ENCODE measurements at regions of chr12 and their contacts with region 1.

Region 1: DNA sequence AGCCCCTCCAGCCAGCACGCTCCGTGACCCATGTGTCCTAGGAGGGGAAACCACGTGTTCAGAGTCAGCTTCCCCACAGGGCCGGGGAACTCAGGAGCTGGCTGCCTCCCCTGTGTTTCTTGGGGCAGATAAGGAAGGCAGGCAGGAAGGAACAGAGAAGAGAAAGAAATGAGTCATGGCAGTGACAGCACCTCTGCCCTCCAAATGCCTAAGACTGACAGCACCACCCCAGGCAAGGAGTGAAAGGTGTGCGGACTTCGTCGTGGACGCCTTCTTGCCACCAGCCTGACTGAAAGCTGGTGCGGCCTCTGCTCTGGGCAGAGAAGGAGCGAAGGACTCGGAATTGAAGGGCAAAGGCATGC is 166.9 kb upstream of the FKBP4 start:
- DNase-seq: no peak
- H3K4me3 ChIP-seq: no peak overlapping the region
- H3K4me3 Mint-ChIP-seq: no peak overlapping the region
- H3K27ac Mint-ChIP-seq: no peak overlapping the region
- H3K4me1 ChIP-seq: no peaks in the 10 kb centered on the region
- H3K4me1 Mint-ChIP-seq: no peaks in the 10 kb centered on the region
- H3K27me3 ChIP-seq: no peaks in the 10 kb centered on the region; the same call in 1 of the 2 replicates
- H3K27me3 Mint-ChIP-seq: peaks cover 46% of the 10 kb centered on the region
- CTCF ChIP-seq: no peak

Region 2: GRCh38 chr12:2494486-2495192 is 133.2 kb before region 1 on chr12:
- CTCF ChIA-PET with region 1: no interaction called
- POLR2A ChIA-PET with region 1: no interaction called
- intact Hi-C with region 1: no loop called
- DNase-seq: no peak
- H3K4me3 ChIP-seq: no peak overlapping the region
- H3K4me3 Mint-ChIP-seq: no peak overlapping the region
- H3K27ac Mint-ChIP-seq: no peak overlapping the region
- H3K4me1 ChIP-seq: no peaks in the 10 kb centered on the region
- H3K4me1 Mint-ChIP-seq: no peaks in the 10 kb centered on the region
- H3K27me3 ChIP-seq: no peaks in the 10 kb centered on the region
- H3K27me3 Mint-ChIP-seq: peaks cover 25% of the 10 kb centered on the region
- CTCF ChIP-seq: no peak

Region 3: GRCh38 chr12:2646341-2646740 is 18.5 kb after region 1 on chr12:
- CTCF ChIA-PET with region 1: no interaction called
- POLR2A ChIA-PET with region 1: no interaction called
- intact Hi-C with region 1: loop called (anchors 1 kb)
- DNase-seq: peak in 1 of 2 experiments; percentile 27
- H3K4me3 ChIP-seq: no peak overlapping the region
- H3K4me3 Mint-ChIP-seq: no peak overlapping the region
- H3K27ac Mint-ChIP-seq: no peak overlapping the region
- H3K4me1 ChIP-seq: no peaks in the 10 kb centered on the region
- H3K4me1 Mint-ChIP-seq: no peaks in the 10 kb centered on the region
- H3K27me3 ChIP-seq: no peaks in the 10 kb centered on the region; the same call in none of the 2 replicates
- H3K27me3 Mint-ChIP-seq: peaks cover 38% of the 10 kb centered on the region
- CTCF ChIP-seq: no peak

Region 4: GRCh38 chr12:2691006-2691344 is 63.2 kb after region 1 on chr12:
- CTCF ChIA-PET with region 1: no interaction called
- POLR2A ChIA-PET with region 1: no interaction called
- intact Hi-C with region 1: no loop called
- DNase-seq: no peak
- H3K4me3 ChIP-seq: no peak overlapping the region
- H3K4me3 Mint-ChIP-seq: peak overlapping the region; percentile 23
- H3K27ac Mint-ChIP-seq: no peak overlapping the region
- H3K4me1 ChIP-seq: no peaks in the 10 kb centered on the region
- H3K4me1 Mint-ChIP-seq: peaks cover 7% of the 10 kb centered on the region
- H3K27me3 ChIP-seq: peaks cover 4% of the 10 kb centered on the region; the same call in 1 of the 2 replicates
- H3K27me3 Mint-ChIP-seq: peaks cover 46% of the 10 kb centered on the region
- CTCF ChIP-seq: no peak

Measured in Caco-2 (cell line).